Left cardiac atrium (tissue), 4 donors: ENCODE measurements at regions of chr9 and their contacts with region 1.

Region 1: DNA sequence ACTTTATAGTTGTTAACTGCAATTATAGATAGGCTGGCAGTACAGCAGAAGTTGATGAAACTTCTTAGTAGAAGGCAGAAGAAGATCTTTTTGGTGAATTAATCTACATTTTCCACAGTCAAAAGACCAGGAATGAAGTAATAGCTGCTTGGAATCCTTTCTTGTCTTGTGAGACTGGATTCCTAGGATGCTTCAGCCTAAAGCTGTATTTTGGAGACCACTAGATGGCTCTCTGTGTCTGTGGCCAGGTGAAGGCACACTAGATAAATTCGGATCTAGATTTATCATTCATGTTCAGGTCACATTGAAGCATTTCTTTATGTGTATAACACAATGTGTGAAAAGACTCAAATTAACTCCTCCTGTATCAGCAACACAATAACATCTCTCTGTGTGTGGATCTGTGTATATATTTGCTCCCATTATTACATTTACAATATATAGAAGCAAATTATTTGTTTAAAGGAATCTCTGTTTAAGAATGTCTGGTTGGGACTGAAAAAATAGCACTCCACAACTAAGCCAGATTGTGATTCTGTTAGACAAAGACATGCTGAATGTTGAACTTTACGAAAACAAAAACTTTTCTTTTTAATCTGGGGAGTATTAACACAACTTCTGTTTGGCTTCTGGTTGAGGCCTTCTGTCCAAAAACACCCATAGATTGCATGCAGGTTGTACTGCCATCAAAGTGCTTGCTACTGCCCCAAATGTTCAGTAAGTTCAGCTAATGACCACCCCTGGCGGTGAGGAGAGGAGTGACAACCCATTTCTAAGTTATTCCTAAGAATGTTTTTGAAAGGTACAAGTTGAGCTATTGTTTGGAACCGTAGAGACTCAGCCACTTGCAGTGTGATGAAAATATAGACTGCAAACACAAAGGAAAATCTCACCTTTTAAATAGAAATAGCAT is 10.6 kb downstream of the GRIN3A start:
- DNase-seq: no peak
- ATAC-seq: no peak

Region 2: GRCh38 chr9:101601904-101602765 is 125.7 kb before region 1 on chr9:
- intact Hi-C with region 1: loop called in 1 of 2 experiments (anchors 5 kb)
- DNase-seq: no peak
- ATAC-seq: peak in 1 of 2 donors; percentile 47

Region 3: DNA sequence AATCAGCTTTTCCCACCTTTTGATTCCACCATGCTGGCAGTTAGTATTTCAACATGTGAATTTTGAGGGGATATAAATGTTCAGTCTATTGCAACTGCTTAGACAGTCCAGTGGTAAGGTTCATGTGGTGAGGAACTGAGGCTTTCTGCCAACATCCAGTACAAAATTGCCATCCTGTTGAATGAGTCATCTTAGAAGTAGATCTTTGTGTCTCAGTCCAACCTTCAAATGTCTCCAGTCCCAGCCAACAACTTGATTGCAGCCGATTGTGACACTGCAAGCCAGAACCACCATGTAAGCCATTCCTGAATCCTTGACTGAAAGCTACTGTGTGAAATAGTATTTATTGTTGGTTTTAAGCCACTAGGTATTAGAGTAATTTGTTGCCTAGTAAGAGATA is 342.1 kb after region 1 on chr9:
- intact Hi-C with region 1: no loop called
- DNase-seq: no peak
- ATAC-seq: no peak